Activated T-helper 1 cell treated with anti-CD3 and anti-CD28 coated beads, Interleukin-12 subunit alpha, Interleukin-12 subunit beta, Interleukin-2, Interleukin-4 antibody, amounts not matched to agents 30 ng/mL and 10 ng/mL and 1 ng/mL, durations not matched to agents 14 hours and 24 hours and 36 hours (primary cell): ENCODE measurements at regions of chr15 and their contacts with region 1.

Region 1: DNA sequence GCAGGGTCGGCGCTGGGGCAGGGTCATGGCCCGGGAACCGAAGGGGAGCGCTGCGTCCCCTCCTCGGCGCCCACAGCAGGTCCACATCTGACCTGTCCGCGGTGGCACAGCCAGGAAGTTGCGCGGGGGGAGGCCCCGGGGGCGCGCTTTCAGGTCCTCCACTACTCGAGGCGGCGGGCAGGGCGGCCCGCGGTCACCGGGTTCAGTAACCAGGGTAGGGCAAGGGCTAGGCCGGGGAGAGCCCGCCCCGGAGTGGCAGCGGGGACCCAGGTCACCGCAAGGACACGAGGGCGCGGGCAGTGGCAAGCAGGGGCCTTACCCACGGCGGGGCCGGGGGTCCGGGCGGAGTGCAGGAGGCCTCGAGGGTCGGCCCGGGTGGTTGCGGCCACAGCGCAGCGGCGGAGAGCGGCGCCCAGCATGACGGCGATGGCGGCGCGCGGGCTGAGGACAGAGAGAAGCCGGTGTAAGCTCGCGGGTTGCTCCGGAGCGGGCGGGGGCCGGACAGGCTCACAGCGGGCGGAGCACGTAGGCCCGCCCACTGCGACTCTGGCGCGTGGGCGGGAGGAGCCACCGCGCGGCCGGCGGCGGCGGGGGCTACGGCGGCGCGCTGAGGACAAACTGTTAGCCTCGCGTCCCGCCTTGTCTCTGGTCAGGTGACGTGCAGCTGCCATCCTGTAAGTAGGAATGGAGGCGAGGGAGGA is at the start of gene COX5A:
- DNase-seq: peak; percentile 91
- H3K4me3 Mint-ChIP-seq: peak within 1 kb of the TSS; percentile 91
- H3K27ac Mint-ChIP-seq: peak within 1 kb of the TSS; percentile 91
- H3K4me1 Mint-ChIP-seq: peaks cover 22% of the 10 kb centered on the region
- H3K27me3 Mint-ChIP-seq: no peaks in the 10 kb centered on the region
- total RNA-seq, gene COX5A: 273 and 290 TPM in 2 replicates

Region 2: GRCh38 chr15:74497584-74497983 is 440.2 kb before region 1 on chr15:
- intact Hi-C with region 1: no loop called
- DNase-seq: no peak
- H3K4me3 Mint-ChIP-seq: no peak overlapping the region
- H3K27ac Mint-ChIP-seq: no peak overlapping the region
- H3K4me1 Mint-ChIP-seq: no peaks in the 10 kb centered on the region
- H3K27me3 Mint-ChIP-seq: no peaks in the 10 kb centered on the region

Region 3: GRCh38 chr15:74615508-74616365 is 322.0 kb before region 1 on chr15 and contains the start of gene CLK3:
- intact Hi-C with region 1: loop called (anchors 5 kb)
- DNase-seq: peak; percentile 94
- H3K4me3 Mint-ChIP-seq: peak within 1 kb of the TSS; percentile 93
- H3K27ac Mint-ChIP-seq: peak within 1 kb of the TSS; percentile 95
- H3K4me1 Mint-ChIP-seq: peaks cover 33% of the 10 kb centered on the region
- H3K27me3 Mint-ChIP-seq: peaks cover 5% of the 10 kb centered on the region
- total RNA-seq, gene CLK3: 103 and 107 TPM in 2 replicates

Region 4: GRCh38 chr15:74858369-74858740 is 79.4 kb before region 1 on chr15:
- intact Hi-C with region 1: no loop called
- DNase-seq: no peak
- H3K4me3 Mint-ChIP-seq: no peak overlapping the region
- H3K27ac Mint-ChIP-seq: peak overlapping the region; percentile 82
- H3K4me1 Mint-ChIP-seq: peaks cover 32% of the 10 kb centered on the region
- H3K27me3 Mint-ChIP-seq: no peaks in the 10 kb centered on the region

Region 5: GRCh38 chr15:74873036-74873755 is 64.5 kb before region 1 on chr15 and contains the start of gene SCAMP2:
- intact Hi-C with region 1: loop called (anchors 1 kb)
- DNase-seq: peak; percentile 86
- H3K4me3 Mint-ChIP-seq: peak within 1 kb of the TSS; percentile 97
- H3K27ac Mint-ChIP-seq: peak within 1 kb of the TSS; percentile 86
- H3K4me1 Mint-ChIP-seq: peaks cover 34% of the 10 kb centered on the region
- H3K27me3 Mint-ChIP-seq: peaks cover 4% of the 10 kb centered on the region
- total RNA-seq, gene SCAMP2: 93.7 and 103 TPM in 2 replicates

Region 6: DNA sequence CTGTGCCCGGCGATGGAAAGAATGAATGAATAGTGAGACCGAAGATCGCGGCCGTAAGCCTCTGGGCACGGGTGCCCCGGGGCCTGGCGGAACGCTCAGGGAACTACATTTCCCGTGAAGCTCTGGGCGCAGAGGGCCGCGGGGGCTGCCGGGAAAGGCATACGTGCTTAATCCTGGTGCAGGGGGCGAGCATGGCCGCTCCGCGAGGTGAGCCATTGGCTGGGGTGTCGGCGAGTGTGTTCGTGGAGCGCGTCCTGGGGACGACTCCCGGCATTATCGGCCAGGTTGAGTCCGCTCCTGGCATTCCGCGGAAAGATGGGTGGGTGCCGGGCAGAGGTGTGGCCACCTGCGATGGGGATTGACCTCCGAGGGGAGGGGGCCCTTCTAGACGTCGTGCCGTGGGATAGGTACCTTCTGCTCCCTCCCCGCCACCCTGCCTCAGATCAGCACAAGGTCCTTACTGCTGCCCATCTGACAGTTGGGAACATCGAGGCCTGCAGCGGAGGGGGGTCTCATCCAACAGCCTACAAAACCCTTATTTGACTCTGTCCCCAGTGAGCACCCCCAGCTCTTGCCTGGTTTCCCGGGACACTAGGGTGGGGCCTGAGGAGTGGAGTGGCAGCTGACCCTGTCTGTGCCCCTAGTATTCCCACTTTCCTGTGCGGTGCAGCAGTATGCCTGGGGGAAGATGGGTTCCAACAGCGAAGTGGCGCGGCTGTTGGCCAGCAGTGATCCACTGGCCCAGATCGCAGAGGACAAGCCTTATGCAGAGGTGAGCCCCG is 47.7 kb before region 1 on chr15 and contains the start of gene MPI:
- intact Hi-C with region 1: loop called (anchors 1 kb)
- DNase-seq: peak; percentile 82
- H3K4me3 Mint-ChIP-seq: peak within 1 kb of the TSS; percentile 91
- H3K27ac Mint-ChIP-seq: peak within 1 kb of the TSS; percentile 92
- H3K4me1 Mint-ChIP-seq: peaks cover 47% of the 10 kb centered on the region
- H3K27me3 Mint-ChIP-seq: no peaks in the 10 kb centered on the region
- total RNA-seq, gene MPI: 57.7 and 62.8 TPM in 2 replicates

Region 7: DNA sequence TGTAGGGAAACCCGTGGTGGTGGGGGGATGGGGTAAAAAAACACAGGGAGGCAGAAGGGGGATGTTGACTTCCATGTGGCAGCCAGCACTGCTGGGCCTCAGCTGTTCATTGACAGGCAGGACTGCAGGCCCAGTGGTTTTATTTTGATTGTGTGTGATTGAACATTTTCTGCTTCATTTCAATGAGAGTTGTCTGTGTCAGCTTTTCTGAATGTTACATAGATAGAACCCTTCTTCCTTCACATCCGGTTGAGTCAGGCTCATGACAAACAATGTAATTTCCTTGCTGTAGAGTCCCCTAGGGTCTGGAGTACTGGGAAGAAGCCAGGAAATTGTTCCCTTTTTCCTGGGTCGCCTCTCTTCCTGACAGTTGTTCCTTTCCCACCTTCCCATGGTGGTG is 27.0 kb after region 1 on chr15:
- intact Hi-C with region 1: no loop called
- DNase-seq: no peak
- H3K4me3 Mint-ChIP-seq: no peak overlapping the region
- H3K27ac Mint-ChIP-seq: no peak overlapping the region
- H3K4me1 Mint-ChIP-seq: peaks cover 16% of the 10 kb centered on the region
- H3K27me3 Mint-ChIP-seq: peaks cover 23% of the 10 kb centered on the region